Upper lobe of right lung (tissue), 1 donor: ENCODE measurements at regions of chr6 and their contacts with region 1.

Region 1: DNA sequence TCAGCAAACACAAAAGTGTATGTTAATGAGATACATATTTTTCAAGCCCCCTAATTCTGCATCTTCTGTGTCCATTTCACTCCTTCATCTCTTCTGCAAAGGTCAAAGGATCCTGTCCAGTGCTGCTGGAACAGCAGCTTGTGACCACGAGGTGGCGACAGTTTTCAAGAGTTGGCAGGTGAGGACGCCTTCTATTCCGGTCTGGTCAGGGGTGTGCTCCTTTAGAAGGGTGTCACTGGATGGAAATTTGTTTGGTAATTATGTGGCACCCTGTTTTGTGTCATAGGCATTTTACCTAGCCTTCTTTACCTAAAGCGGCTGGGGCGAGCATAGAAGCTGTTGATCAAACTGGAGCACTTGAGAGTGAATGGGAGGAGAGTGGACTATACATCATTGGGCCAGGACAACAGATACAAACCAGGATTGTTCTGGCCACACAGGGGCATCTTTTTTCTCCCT is 32.9 kb upstream of the ERVFRD-1 start:
- DNase-seq: peak; percentile 84
- ATAC-seq: peak; percentile 94
- H3K4me3 ChIP-seq: no peak overlapping the region
- H3K27ac ChIP-seq: no peak overlapping the region
- H3K4me1 ChIP-seq: no peaks in the 10 kb centered on the region
- H3K27me3 ChIP-seq: no peaks in the 10 kb centered on the region
- CTCF ChIP-seq: peak; percentile 96

Region 2: GRCh38 chr6:11076540-11076939 is 67.9 kb before region 1 on chr6:
- intact Hi-C with region 1: no loop called
- DNase-seq: no peak
- ATAC-seq: no peak
- H3K4me3 ChIP-seq: no peak overlapping the region
- H3K27ac ChIP-seq: no peak overlapping the region
- H3K4me1 ChIP-seq: no peaks in the 10 kb centered on the region
- H3K27me3 ChIP-seq: no peaks in the 10 kb centered on the region
- CTCF ChIP-seq: no peak

Region 3: GRCh38 chr6:11496152-11497060 is 352.0 kb after region 1 on chr6:
- intact Hi-C with region 1: loop called (anchors 10 kb)
- DNase-seq: no peak
- ATAC-seq: peak; percentile 95
- H3K4me3 ChIP-seq: no peak overlapping the region
- H3K27ac ChIP-seq: peak overlapping the region; percentile 65
- H3K4me1 ChIP-seq: peaks cover 21% of the 10 kb centered on the region
- H3K27me3 ChIP-seq: no peaks in the 10 kb centered on the region
- CTCF ChIP-seq: peak; percentile 93

Region 4: DNA sequence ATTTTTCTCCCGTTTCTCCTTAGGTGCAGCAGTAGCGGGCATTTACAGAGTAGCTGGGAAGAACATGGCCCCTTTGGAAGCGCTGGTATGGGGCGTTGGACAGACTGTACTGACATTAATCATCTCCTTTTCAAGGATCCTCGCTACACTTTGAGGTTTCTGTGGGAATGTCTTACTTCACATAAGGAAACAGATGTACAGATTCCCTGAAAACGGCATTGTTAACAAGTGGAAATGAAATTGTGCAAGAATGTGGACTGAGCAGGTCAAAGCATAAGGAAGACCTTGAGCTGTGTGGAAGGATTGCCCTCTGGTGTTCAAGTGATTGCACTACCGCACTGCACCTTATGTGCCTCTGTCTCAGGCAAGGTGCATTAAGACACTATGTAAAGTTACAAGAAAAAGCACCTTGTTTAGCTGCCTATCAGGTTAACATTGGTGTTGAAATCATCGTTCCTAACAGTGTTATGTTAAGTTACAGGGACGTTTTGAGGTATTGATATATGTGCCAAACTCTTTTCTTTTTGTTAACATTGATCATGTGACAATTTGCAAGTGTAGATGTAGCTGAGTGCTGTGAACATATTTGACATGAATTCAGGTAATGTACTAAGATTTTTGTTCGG is 431.1 kb after region 1 on chr6:
- intact Hi-C with region 1: loop called (anchors 10 kb)
- DNase-seq: no peak
- ATAC-seq: peak; percentile 100
- H3K4me3 ChIP-seq: peak overlapping the region; percentile 17
- H3K27ac ChIP-seq: no peak overlapping the region
- H3K4me1 ChIP-seq: no peaks in the 10 kb centered on the region
- H3K27me3 ChIP-seq: no peaks in the 10 kb centered on the region
- CTCF ChIP-seq: peak; percentile 95